ENCODE measurements at regions of chr12 and their contacts with region 1.

Region 1: GRCh38 chr12:120301962-120302815 is at the start of gene SIRT4:
- DNase-seq: peak; percentile 73 to 96 (median 86)
- ATAC-seq: peak; percentile 99 to 100 (median 100)
- H3K4me3 ChIP-seq: peak within 1 kb of the TSS; percentile 74 to 97
- H3K4me3 Mint-ChIP-seq: peak within 1 kb of the TSS; percentile 87 to 97 (median 89)
- H3K27ac ChIP-seq: no peak within 1 kb of the TSS
- H3K27ac Mint-ChIP-seq: peak within 1 kb of the TSS; percentile 36 to 94
- H3K4me1 ChIP-seq: peaks cover 0 to 10% of the 10 kb centered on the region in 2 experiments
- H3K4me1 Mint-ChIP-seq: peaks cover 12 to 13% (median 12%) of the 10 kb centered on the region in 3 donors
- H3K27me3 ChIP-seq: no peaks in the 10 kb centered on the region
- H3K27me3 Mint-ChIP-seq: no peaks in the 10 kb centered on the region
- total RNA-seq, gene SIRT4: 0.73 to 5.7 (median 4.1) TPM

Region 2: GRCh38 chr12:119803381-119803791 is 498.8 kb before region 1 on chr12:
- CTCF ChIA-PET with region 1: no interaction called
- POLR2A ChIA-PET with region 1: no interaction called
- DNase-seq: no peak
- ATAC-seq: no peak
- H3K4me3 ChIP-seq: no peak overlapping the region
- H3K4me3 Mint-ChIP-seq: no peak overlapping the region
- H3K27ac ChIP-seq: no peak overlapping the region
- H3K27ac Mint-ChIP-seq: no peak overlapping the region
- H3K4me1 ChIP-seq: no peaks in the 10 kb centered on the region
- H3K4me1 Mint-ChIP-seq: no peaks in the 10 kb centered on the region
- H3K27me3 ChIP-seq: peaks cover 0 to 3% of the 10 kb centered on the region in 2 experiments
- H3K27me3 Mint-ChIP-seq: no peaks in the 10 kb centered on the region

Region 3: GRCh38 chr12:120100435-120101029 is 201.7 kb before region 1 on chr12:
- CTCF ChIA-PET with region 1: no interaction called
- POLR2A ChIA-PET with region 1: no interaction called
- DNase-seq: no peak
- ATAC-seq: no peak
- H3K4me3 ChIP-seq: no peak overlapping the region
- H3K4me3 Mint-ChIP-seq: no peak overlapping the region
- H3K27ac ChIP-seq: peak overlapping the region; percentile 34
- H3K27ac Mint-ChIP-seq: peak overlapping the region; percentile 1 to 31
- H3K4me1 ChIP-seq: peaks cover 0 to 40% of the 10 kb centered on the region in 2 experiments
- H3K4me1 Mint-ChIP-seq: peaks cover 6 to 35% (median 32%) of the 10 kb centered on the region in 3 donors
- H3K27me3 ChIP-seq: no peaks in the 10 kb centered on the region
- H3K27me3 Mint-ChIP-seq: no peaks in the 10 kb centered on the region

Region 4: DNA sequence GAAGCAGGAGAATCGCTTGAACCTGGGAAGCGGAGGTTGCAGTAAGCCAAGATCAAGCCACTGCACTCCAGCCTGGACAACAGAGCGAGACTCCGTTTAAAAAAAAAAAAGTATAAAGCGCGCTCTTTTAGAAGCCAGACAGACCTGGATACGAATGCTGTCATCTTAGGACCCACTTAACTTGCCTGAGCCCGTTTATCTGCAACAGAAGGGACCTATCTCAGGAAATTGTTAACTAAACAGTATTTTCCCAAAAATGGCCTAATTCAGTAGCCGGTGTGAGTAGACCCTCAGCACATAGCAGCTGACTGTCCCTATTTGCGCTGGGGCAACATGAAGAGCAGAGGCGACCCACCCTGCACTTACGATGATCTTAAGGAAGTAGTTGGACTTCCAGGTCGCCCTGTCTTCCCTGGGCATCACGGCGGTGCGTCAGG is 101.8 kb before region 1 on chr12:
- CTCF ChIA-PET with region 1: interaction called in 1 of 2 experiments, 11 read pairs
- POLR2A ChIA-PET with region 1: interaction called in 1 of 2 experiments, 5 read pairs
- DNase-seq: no peak
- ATAC-seq: no peak
- H3K4me3 ChIP-seq: peak overlapping the region; percentile 66 to 92
- H3K4me3 Mint-ChIP-seq: peak overlapping the region; percentile 94 to 97 (median 96)
- H3K27ac ChIP-seq: peak overlapping the region; percentile 59
- H3K27ac Mint-ChIP-seq: peak overlapping the region; percentile 99
- H3K4me1 ChIP-seq: peaks cover 11 to 37% of the 10 kb centered on the region in 2 experiments
- H3K4me1 Mint-ChIP-seq: peaks cover 36 to 46% (median 43%) of the 10 kb centered on the region in 3 donors
- H3K27me3 ChIP-seq: no peaks in the 10 kb centered on the region
- H3K27me3 Mint-ChIP-seq: no peaks in the 10 kb centered on the region

Region 5: GRCh38 chr12:120234643-120235368 is 67.4 kb before region 1 on chr12:
- CTCF ChIA-PET with region 1: interaction called, 3 to 4 read pairs
- POLR2A ChIA-PET with region 1: interaction called in 1 of 2 experiments, 10 read pairs
- DNase-seq: peak in 1 of 35 experiments; percentile 27
- ATAC-seq: no peak
- H3K4me3 ChIP-seq: no peak overlapping the region
- H3K4me3 Mint-ChIP-seq: no peak overlapping the region
- H3K27ac ChIP-seq: peak overlapping the region; percentile 24
- H3K27ac Mint-ChIP-seq: peak overlapping the region; percentile 90 to 97
- H3K4me1 ChIP-seq: peaks cover 28 to 99% of the 10 kb centered on the region in 2 experiments
- H3K4me1 Mint-ChIP-seq: peaks cover 81 to 93% (median 90%) of the 10 kb centered on the region in 3 donors
- H3K27me3 ChIP-seq: no peaks in the 10 kb centered on the region
- H3K27me3 Mint-ChIP-seq: no peaks in the 10 kb centered on the region

Region 6: DNA sequence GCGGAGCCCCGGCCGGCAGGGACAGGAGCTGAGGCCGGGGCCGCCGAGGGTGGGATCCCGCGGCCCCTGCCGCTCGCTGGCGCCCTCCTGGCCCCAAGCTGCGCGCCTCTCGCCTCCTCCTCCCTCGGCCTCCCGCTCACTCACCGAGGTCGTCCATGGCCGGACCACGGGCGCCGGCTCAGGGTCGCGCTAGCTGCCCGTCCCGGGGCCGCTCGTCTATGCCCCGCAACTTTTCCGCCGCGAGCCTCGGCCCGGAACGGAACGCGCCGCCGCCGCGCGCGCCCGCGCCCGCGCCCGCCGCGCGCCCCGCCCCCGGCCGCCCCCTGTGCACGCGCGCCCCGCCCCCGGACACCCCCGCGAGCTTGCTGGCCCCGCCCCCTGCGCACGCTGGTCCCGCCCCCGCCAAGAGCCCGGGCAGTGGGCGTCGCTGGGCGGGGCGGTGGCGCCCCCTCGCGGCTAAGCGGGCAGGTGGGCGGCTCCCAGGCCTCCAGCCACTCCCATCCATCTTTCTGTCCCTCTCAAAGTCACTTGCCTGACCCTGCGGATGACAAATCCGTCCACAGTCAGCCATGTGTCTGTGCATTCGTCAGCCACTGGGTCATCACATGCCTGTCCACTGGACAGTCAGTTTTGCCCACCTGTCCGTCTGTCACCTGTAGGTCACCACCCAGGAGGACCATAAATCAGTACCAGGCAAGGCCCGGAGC is 36.6 kb before region 1 on chr12 and contains the start of gene PXN:
- CTCF ChIA-PET with region 1: interaction called in 1 of 2 experiments, 11 read pairs
- POLR2A ChIA-PET with region 1: no interaction called
- DNase-seq: peak; percentile 70 to 96 (median 88)
- ATAC-seq: peak; percentile 88 to 95 (median 89)
- H3K4me3 ChIP-seq: peak within 1 kb of the TSS; percentile 85 to 94
- H3K4me3 Mint-ChIP-seq: peak within 1 kb of the TSS; percentile 90 to 97 (median 94)
- H3K27ac ChIP-seq: peak within 1 kb of the TSS; percentile 74
- H3K27ac Mint-ChIP-seq: peak within 1 kb of the TSS; percentile 88 to 93
- H3K4me1 ChIP-seq: peaks cover 30 to 48% of the 10 kb centered on the region in 2 experiments
- H3K4me1 Mint-ChIP-seq: peaks cover 41 to 47% (median 41%) of the 10 kb centered on the region in 3 donors
- H3K27me3 ChIP-seq: no peaks in the 10 kb centered on the region
- H3K27me3 Mint-ChIP-seq: no peaks in the 10 kb centered on the region
- total RNA-seq, gene PXN: 128 to 202 (median 137) TPM

Region 7: DNA sequence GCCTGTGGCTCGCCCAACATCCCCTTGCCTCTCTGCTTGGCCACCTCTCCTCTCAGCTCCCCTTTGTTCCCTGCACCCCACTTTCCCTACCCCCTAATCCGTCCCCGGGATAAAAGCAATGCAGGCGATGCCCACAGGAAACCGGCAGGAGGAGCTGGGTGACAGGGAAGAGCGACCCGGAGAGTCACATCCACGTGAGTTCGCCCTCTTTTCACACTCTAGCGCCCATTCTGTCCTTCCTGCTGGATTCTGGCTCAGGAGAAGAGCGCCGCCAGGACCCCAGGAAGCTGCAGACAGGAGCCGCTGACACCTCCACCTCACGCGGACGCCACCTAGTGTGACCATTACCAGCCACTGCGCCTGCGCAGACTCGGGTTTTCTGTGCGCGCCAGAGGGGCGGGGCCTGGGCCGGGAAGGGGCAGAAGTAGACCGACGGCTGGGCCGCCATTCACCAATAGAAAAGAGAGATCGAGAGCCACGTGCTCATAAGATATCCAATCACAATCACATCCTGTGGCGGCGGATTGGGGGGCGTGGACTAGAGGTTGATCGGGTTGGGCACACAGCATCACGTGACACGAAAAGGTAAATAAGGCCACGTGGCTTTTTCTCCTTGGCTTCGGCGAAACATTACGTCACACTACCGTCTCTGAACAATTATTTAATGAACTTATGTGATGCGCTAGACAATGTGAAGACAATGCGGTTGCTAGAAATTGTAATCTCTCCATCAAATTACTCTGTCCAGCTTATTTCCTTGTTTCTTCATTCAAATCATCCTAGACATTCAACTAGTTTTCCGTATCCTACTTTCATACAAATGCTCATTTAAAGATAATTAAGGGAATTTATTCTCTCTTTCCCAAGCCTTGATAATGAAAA is 15.3 kb after region 1 on chr12:
- CTCF ChIA-PET with region 1: interaction called, 7 to 24 read pairs
- POLR2A ChIA-PET with region 1: no interaction called
- DNase-seq: peak; percentile 98 to 100 (median 100)
- ATAC-seq: peak; percentile 99 to 100 (median 99)
- H3K4me3 ChIP-seq: peak overlapping the region; percentile 66 to 82
- H3K4me3 Mint-ChIP-seq: peak overlapping the region; percentile 90 to 92 (median 90)
- H3K27ac ChIP-seq: peak overlapping the region; percentile 83
- H3K27ac Mint-ChIP-seq: peak overlapping the region; percentile 95 to 96
- H3K4me1 ChIP-seq: peaks cover 7 to 14% of the 10 kb centered on the region in 2 experiments
- H3K4me1 Mint-ChIP-seq: peaks cover 10 to 14% (median 13%) of the 10 kb centered on the region in 3 donors
- H3K27me3 ChIP-seq: no peaks in the 10 kb centered on the region
- H3K27me3 Mint-ChIP-seq: no peaks in the 10 kb centered on the region

Region 8: GRCh38 chr12:120495723-120496412 is 193.7 kb after region 1 on chr12 and contains the start of gene DYNLL1:
- CTCF ChIA-PET with region 1: no interaction called
- POLR2A ChIA-PET with region 1: no interaction called
- DNase-seq: peak; percentile 89 to 99 (median 95)
- ATAC-seq: peak; percentile 95 to 99 (median 97)
- H3K4me3 ChIP-seq: peak within 1 kb of the TSS; percentile 83 to 97
- H3K4me3 Mint-ChIP-seq: peak within 1 kb of the TSS; percentile 88 to 96 (median 91)
- H3K27ac ChIP-seq: peak within 1 kb of the TSS; percentile 63
- H3K27ac Mint-ChIP-seq: peak within 1 kb of the TSS; percentile 90 to 93
- H3K4me1 ChIP-seq: peaks cover 15 to 16% of the 10 kb centered on the region in 2 experiments
- H3K4me1 Mint-ChIP-seq: peaks cover 29 to 37% (median 30%) of the 10 kb centered on the region in 3 donors
- H3K27me3 ChIP-seq: no peaks in the 10 kb centered on the region
- H3K27me3 Mint-ChIP-seq: no peaks in the 10 kb centered on the region
- total RNA-seq, gene DYNLL1: 47.2 to 90.1 (median 75.5) TPM

Region 9: GRCh38 chr12:120884644-120885043 is 582.5 kb after region 1 on chr12:
- CTCF ChIA-PET with region 1: interaction called in 1 of 2 experiments, 14 read pairs
- POLR2A ChIA-PET with region 1: no interaction called
- DNase-seq: no peak
- ATAC-seq: no peak
- H3K4me3 ChIP-seq: no peak overlapping the region
- H3K4me3 Mint-ChIP-seq: no peak overlapping the region
- H3K27ac ChIP-seq: no peak overlapping the region
- H3K27ac Mint-ChIP-seq: no peak overlapping the region
- H3K4me1 ChIP-seq: peaks cover 15 to 23% of the 10 kb centered on the region in 2 experiments
- H3K4me1 Mint-ChIP-seq: peaks cover 76 to 83% (median 79%) of the 10 kb centered on the region in 3 donors
- H3K27me3 ChIP-seq: no peaks in the 10 kb centered on the region
- H3K27me3 Mint-ChIP-seq: no peaks in the 10 kb centered on the region

Measured in T-cell (primary cell).